ENCODE measurements at regions of chr3 and their contacts with region 1.

Region 1: GRCh38 chr3:88123526-88123925 is 26.2 kb upstream of the C3orf38 start:
- DNase-seq: no peak
- H3K4me3 ChIP-seq: no peak overlapping the region
- H3K27ac ChIP-seq: no peak overlapping the region
- H3K4me1 ChIP-seq: no peaks in the 10 kb centered on the region
- H3K27me3 ChIP-seq: no peaks in the 10 kb centered on the region
- CTCF ChIP-seq: no peak

Region 2: GRCh38 chr3:87895983-87896382 is 227.5 kb before region 1 on chr3:
- intact Hi-C with region 1: loop called (anchors 10 kb)
- DNase-seq: no peak
- H3K4me3 ChIP-seq: no peak overlapping the region
- H3K27ac ChIP-seq: no peak overlapping the region
- H3K4me1 ChIP-seq: no peaks in the 10 kb centered on the region
- H3K27me3 ChIP-seq: no peaks in the 10 kb centered on the region
- CTCF ChIP-seq: no peak